K562 (cell line): ENCODE measurements at regions of chr3 and their contacts with region 1.

Region 1: DNA sequence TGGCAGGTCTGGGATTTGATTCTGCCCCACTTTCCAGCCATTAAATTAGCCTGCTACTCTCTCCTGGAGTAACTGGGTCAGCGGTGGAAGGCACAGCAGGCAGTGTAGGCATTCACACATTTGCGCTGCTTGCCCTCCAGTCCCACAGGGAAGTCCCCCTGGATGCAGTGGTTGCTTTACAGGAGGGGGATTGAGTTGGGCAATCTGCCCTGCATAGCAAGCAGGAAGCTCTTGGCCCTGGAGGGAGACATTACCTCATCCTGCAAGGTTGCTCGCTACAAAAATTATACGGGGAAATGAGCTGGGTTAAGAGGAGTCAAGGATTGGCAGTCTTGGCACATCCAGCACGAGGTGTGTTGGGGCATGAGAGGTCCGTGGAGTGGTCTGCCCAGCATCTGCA is 14.8 kb downstream of the MCM2 start:
- DNase-seq: no peak
- ATAC-seq: no peak
- H3K4me3 ChIP-seq: no peak overlapping the region
- H3K27ac ChIP-seq: no peak overlapping the region
- H3K4me1 ChIP-seq: no peaks in the 10 kb centered on the region
- H3K27me3 ChIP-seq: no peaks in the 10 kb centered on the region
- CTCF ChIP-seq: no peak
- EP300 ChIP-seq: no peak
- POLR2A ChIP-seq: no peak
- RAD21 ChIP-seq: no peak

Region 2: GRCh38 chr3:127598841-127599570 is 14.0 kb before region 1 on chr3:
- CTCF ChIA-PET with region 1: no interaction called
- POLR2A ChIA-PET with region 1: interaction called, 18 read pairs
- in situ Hi-C with region 1: no loop called
- intact Hi-C with region 1: no loop called
- DNase-seq: no peak
- ATAC-seq: no peak
- H3K4me3 ChIP-seq: peak overlapping the region; percentile 63
- H3K27ac ChIP-seq: peak overlapping the region; percentile 93
- H3K4me1 ChIP-seq: peaks cover 29 to 37% of the 10 kb centered on the region in 2 experiments; a peak in 4 of 5 replicates
- H3K27me3 ChIP-seq: no peaks in the 10 kb centered on the region
- CTCF ChIP-seq: no peak
- EP300 ChIP-seq: no peak
- POLR2A ChIP-seq: no peak
- RAD21 ChIP-seq: no peak

Region 3: DNA sequence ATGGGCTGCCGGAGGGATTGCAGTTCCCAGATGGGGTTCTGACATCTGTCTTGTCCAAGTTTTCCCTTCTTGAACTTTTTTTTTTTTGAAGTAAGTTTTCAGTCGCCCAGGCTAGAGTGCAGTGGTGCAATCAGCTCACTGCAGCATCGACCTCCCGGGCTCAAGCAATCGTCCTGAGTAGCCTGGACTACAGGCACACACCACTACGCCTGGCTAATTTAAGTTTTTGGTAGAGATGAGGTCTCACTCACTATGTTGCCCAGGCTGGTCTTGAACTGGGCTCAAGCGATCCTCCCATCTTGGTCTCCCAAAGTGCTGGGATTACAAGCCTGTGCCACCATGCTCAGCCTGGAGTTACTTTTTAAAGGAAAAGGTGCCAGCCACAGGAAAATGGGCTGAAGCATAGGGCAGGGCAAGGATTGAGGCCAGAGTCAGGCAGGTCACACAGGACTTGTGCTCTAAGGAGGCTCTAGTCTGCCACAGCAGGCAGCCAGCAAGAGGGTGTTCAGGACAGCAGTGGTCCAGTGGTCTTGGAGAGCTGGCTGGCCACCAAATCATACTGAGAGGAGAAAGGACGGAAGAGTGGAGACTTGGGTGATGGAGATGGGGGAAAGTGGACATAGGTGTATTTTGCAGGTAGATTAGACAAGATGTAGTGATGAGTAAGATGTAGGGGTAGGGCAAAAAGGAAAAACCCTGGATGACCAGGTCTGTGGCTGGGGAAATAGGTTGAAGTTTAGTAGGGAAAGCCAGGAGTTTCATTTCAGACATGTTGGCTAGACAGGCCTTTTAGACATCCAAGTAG is 10.0 kb after region 1 on chr3:
- CTCF ChIA-PET with region 1: no interaction called
- POLR2A ChIA-PET with region 1: interaction called, 18 read pairs
- in situ Hi-C with region 1: no loop called
- intact Hi-C with region 1: no loop called
- DNase-seq: no peak
- ATAC-seq: peak; percentile 57
- H3K4me3 ChIP-seq: no peak overlapping the region
- H3K27ac ChIP-seq: no peak overlapping the region
- H3K4me1 ChIP-seq: no peaks in the 10 kb centered on the region
- H3K27me3 ChIP-seq: no peaks in the 10 kb centered on the region
- CTCF ChIP-seq: no peak
- EP300 ChIP-seq: no peak
- POLR2A ChIP-seq: no peak; the same call in 1 of the 2 replicates
- RAD21 ChIP-seq: no peak

Region 4: DNA sequence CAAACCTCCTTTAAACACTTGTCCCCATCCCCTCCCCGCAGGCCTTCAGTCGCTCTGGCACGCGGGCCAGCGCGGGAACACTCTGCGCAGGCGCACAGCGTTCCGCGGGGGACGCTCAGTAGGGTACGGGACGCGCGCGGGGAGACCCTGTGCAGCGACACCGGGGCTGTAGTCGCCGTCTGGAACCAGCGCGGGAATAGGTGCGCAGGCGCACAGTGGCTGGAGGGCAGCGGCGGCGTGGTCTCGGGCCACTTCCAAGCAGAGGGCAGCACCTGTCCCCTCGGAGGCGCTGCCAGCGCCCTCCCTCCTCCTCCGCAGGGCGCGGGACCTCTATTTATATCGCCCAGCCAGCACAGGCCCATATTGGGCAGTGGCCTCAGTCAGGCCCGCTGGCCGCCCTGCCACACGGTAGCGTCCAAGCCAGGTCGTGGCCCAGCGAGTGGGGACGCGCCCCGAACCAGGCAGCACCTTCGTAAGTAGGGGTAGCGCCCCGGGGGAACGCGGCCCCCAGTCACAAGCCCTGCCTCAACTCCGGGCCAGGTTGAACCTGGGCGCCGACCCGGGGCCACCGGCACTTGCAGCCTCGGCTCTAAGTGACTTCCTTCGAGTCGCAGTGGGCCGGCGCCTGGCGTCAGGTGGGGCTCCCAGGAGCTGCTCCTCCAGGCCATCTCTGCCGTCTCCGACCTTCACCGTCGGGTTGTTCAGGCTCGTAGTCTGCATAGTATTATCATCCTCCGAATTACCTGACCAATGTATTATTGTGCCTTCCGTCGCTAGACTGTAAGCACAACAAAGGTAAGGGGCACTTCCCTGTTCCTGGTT is 302.4 kb after region 1 on chr3 and contains the start of gene KBTBD12:
- CTCF ChIA-PET with region 1: no interaction called
- POLR2A ChIA-PET with region 1: no interaction called
- in situ Hi-C with region 1: no loop called
- intact Hi-C with region 1: no loop called
- DNase-seq: no peak
- ATAC-seq: no peak
- H3K4me3 ChIP-seq: no peak within 1 kb of the TSS
- H3K27ac ChIP-seq: no peak within 1 kb of the TSS
- H3K4me1 ChIP-seq: no peaks in the 10 kb centered on the region
- H3K27me3 ChIP-seq: peaks cover 7 to 20% of the 10 kb centered on the region in 2 experiments; a peak in 3 of 5 replicates
- CTCF ChIP-seq: no peak
- EP300 ChIP-seq: no peak
- POLR2A ChIP-seq: no peak
- RAD21 ChIP-seq: no peak
- polyA plus RNA-seq, gene KBTBD12: not detected